Right ventricle myocardium inferior (tissue), 1 donor: ENCODE measurements at regions of chr18 and their contacts with region 1.

Region 1: GRCh38 chr18:12317664-12318333 is 9.8 kb downstream of the TUBB6 start:
- DNase-seq: no peak
- ATAC-seq: peak; percentile 78

Region 2: DNA sequence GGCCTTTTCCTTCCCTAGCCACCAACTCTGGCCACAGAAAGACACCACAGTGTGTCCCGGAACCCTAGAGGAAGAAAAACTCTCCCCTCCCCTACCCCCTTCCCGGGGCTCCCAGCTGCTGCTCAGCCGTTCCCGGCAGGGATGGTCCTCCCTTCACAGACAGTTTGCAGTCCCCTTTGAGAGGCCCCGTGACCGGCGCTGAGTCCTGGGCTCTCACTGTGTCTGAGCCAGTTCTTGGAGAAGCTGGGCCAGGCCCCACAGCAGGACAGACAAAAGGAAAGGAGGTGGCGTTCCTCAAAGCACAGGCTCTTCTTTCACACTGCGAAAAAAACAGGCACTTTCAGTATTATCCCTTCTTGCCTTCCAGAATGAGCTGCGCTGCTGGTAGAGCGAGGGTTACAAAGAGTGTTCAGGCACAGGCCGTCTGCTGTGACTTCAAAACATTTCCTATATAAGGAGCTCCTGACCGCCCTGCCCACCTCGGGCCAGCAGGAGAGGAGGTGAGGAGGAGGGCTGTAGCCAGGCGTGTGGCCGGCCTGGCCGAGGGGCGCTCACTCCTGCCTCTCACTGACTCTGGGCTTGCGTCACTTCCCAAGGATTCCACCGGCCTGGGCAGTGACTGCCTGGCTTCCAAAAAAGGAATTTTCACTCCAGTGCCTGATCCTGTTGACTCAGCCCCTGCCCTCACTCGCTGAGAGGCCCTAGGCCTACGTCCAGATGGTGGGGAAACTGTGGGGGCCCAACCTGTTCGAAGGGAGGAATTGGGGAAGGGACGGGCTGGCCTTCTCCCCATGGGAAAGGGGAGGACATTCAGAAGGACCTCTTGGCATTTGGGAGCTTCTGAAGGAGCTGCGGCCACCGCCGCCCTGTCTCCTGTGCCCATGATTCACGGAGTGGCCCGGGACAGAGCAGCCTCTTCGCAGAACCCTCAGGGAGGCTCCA is 38.8 kb before region 1 on chr18:
- intact Hi-C with region 1: loop called (anchors 5 kb)
- DNase-seq: peak; percentile 90
- ATAC-seq: peak; percentile 95

Region 3: DNA sequence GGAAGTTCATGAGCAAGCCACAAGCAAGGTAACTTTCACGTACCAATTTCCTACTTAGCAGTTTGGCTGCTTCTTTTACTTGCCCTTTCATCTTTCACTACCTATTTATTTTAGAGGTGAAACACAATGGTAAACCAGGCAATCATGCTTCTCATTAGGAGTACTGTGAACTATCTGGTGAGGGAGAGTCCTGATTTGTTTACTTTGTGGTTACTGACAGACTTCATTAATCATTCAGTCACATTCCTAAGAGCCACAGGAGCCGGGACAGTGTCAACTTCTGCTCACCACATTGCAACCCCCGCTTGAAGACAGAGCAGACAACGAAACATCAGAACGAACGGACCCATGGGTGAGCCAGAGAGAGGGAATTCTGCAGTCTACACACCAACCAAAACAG is 19.1 kb after region 1 on chr18:
- intact Hi-C with region 1: loop called (anchors 1 kb)
- DNase-seq: no peak
- ATAC-seq: no peak

Region 4: GRCh38 chr18:12478269-12479047 is 160.7 kb after region 1 on chr18:
- intact Hi-C with region 1: no loop called
- DNase-seq: no peak
- ATAC-seq: no peak

Region 5: GRCh38 chr18:12828116-12829051 is 510.6 kb after region 1 on chr18:
- intact Hi-C with region 1: no loop called
- DNase-seq: no peak
- ATAC-seq: no peak

Region 6: GRCh38 chr18:12968619-12969018 is 650.8 kb after region 1 on chr18:
- intact Hi-C with region 1: no loop called
- DNase-seq: no peak
- ATAC-seq: no peak